CD4-positive, alpha-beta memory T cell (primary cell): ENCODE measurements at regions of chr19 and their contacts with region 1.

Region 1: DNA sequence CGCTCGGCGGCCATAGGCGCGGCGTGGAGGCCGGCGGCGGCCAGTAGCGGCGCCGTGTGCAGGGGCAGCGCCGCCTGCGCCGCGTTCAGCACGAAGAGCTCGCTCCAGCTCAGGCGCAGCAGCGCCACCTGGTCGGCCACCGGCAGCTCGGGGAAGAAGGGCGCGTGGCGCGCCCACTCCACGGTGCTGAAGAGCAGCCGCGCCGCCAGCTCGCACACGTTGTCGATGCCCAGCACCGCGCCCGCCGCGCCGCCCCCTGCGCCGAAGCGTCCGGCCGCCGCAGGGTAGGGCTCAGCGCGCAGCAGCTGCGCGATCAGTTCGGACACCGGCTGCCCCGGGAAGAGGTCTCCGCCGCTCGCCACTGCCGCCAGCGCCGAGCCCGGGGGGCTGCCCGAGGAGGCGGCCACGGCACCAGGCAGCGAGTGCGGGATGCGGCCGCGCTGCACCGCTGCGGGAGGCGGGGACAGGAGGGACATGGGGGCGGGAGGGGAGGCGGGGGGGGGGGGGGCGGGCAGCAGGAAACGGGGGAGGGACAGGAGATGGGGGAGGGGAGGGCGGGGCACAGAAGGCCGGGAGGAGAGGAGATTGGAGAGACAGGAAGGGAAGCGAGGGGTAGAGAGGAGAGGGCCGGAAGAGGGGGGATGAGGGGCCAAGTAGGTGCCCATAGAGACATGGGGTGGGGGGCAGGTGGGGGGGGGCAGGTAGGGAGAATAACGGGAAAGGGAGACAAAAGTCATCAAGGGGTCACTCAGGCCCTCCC is 9.8 kb downstream of the OCEL1 start:
- DNase-seq: peak; percentile 71 to 77 (median 73)
- H3K4me3 ChIP-seq: peak overlapping the region; percentile 69 to 84
- H3K4me3 Mint-ChIP-seq: peak overlapping the region; percentile 70 to 85 (median 78)
- H3K27ac ChIP-seq: peak overlapping the region; percentile 40
- H3K27ac Mint-ChIP-seq: peak overlapping the region in 1 of 7 donors; percentile 64
- H3K4me1 ChIP-seq: peaks cover 20% of the 10 kb centered on the region
- H3K4me1 Mint-ChIP-seq: peaks cover 2 to 28% (median 6%) of the 10 kb centered on the region in 4 donors
- H3K27me3 ChIP-seq: no peaks in the 10 kb centered on the region
- H3K27me3 Mint-ChIP-seq: no peaks in the 10 kb centered on the region

Region 2: DNA sequence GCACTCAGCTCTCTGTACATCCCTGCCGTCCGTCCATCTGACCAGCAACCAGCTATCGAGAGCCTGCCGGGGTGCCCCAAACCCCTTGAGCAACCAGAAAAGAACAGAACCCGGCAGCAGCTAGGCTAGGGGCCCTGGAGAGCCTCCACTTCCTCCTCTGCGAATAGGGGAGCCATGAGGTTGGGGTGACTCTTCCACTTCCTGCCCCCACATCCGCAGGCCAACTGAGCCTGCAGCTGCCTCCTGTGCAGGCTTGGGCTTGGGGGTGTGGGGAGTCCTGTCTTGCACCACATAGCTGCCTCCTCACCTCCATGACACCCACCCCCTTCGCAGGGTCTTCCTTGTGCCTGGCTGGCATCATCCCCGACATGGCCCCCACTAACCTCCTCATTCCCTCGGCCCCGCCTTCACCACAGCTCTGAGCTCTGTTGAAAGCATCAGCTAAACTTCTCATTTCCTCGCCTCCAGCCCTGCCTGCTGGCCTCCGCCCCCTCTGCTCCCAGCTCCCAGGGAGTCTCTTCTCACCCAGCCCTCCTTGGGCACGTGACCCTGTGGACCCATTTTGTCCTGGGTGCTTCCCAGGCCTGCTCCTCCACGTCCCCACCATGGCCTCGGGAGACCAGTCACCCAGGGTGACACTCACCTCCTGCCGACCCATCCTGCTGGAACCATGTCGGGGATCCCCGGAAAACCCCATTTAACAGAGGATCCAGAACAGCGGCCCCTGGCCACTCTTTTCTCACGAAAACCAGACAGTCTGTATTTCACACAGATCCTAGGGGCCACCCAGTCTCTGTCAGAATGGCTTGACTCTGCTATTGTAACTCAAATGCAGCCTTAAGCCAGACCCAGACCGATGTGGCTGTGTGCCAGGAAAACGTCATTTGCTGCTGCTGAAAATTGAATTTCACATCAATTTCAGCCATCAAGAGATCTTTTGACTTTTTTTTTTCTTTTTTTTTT is 109.8 kb before region 1 on chr19:
- CTCF ChIA-PET with region 1: interaction called, 3 read pairs
- POLR2A ChIA-PET with region 1: interaction called, 15 read pairs
- intact Hi-C with region 1: no loop called
- DNase-seq: peak; percentile 82 to 91 (median 87)
- H3K4me3 ChIP-seq: peak overlapping the region; percentile 51 to 73
- H3K4me3 Mint-ChIP-seq: peak overlapping the region; percentile 79 to 93 (median 91)
- H3K27ac ChIP-seq: peak overlapping the region; percentile 76
- H3K27ac Mint-ChIP-seq: peak overlapping the region; percentile 97 to 99 (median 99)
- H3K4me1 ChIP-seq: peaks cover 52% of the 10 kb centered on the region
- H3K4me1 Mint-ChIP-seq: peaks cover 23 to 61% (median 40%) of the 10 kb centered on the region in 4 donors
- H3K27me3 ChIP-seq: no peaks in the 10 kb centered on the region
- H3K27me3 Mint-ChIP-seq: no peaks in the 10 kb centered on the region

Region 3: DNA sequence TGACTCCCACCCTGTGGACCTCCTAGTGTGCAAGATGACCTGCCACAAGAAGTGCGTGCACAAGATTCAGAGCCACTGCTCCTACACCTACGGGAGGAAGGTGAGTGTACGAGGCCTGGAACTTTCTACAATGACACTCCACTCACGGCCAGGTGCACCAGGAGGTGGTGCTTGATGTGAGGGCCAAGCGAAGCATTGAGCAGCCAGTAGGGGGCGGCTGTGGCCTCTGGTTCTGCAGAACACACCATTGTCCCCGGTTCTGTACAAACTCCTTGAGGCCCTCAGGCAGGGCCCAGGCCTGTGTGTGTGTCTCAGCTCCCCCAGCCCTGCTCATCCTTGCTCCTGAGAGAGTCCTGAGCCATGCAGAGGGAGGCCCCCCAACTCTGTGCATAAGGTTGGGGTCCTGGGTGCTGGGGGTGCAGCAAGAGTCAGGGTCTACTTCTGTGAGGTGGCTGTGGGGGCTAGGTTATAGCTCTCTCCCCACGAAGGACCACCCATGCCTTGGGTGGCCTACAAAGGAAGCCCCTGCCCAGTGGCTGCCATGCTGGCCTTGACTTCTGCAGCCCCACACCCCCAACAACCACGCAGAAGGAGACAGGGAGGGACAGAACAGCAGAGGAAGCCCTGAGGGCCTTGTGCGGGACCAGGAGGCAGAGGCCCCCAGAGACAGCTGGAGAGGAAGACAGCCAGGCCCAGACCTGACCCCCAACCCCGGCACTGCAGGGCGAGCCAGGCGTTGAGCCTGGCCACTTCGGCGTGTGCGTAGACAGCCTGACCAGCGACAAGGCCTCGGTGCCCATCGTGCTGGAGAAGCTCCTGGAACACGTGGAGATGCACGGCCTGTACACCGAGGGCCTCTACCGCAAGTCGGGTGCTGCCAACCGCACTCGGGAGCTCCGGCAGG is 30.3 kb before region 1 on chr19:
- CTCF ChIA-PET with region 1: interaction called, 20 read pairs
- POLR2A ChIA-PET with region 1: interaction called, 9 read pairs
- intact Hi-C with region 1: loop called (anchors 1 kb)
- DNase-seq: peak; percentile 48 to 66 (median 63)
- H3K4me3 ChIP-seq: no peak overlapping the region
- H3K4me3 Mint-ChIP-seq: no peak overlapping the region
- H3K27ac ChIP-seq: no peak overlapping the region
- H3K27ac Mint-ChIP-seq: peak overlapping the region in 2 of 7 donors; percentile 8 to 43
- H3K4me1 ChIP-seq: no peaks in the 10 kb centered on the region
- H3K4me1 Mint-ChIP-seq: peaks cover 0 to 6% (median 2%) of the 10 kb centered on the region in 4 donors
- H3K27me3 ChIP-seq: no peaks in the 10 kb centered on the region
- H3K27me3 Mint-ChIP-seq: no peaks in the 10 kb centered on the region